Activated CD4-positive, alpha-beta T cell treated with anti-CD3 and anti-CD28 coated beads for 36 hours (primary cell): ENCODE measurements at regions of chr16 and their contacts with region 1.

Region 1: DNA sequence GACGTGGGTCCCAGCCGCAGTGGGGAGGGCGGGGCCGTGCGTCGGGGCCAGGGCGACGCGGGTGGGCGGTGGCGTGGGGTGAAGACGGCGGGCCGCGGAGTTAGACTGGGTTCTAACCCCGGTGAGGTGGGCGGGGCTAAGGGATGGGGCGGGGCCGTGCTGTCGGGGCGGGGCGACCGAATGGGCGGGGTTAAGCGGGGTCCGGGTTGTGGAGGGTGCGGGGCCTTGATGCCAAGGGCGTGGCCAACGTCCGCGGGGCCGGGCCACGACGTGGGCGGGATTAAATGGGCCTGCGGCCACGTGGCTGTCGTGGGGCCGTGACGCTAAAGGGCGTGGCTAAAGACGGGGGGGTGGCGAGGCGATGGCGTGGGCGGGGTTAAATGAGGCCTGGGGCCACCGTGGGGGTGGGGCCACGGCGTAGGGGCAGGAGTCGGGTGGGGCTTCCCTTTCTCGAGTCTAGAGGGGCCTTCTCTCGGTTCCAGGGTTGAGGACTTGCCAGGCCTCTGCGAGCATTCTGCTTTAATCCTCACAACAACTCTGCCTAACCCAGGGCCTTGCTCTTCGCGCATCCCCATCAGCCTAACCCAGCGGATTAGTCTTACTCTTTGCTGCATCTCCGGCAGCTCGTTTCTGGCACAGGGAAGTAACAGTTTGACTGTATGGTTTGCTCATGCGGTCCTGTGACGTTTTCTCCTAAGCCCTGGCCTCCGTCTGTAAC is 739 bp downstream of the TCF25 start:
- DNase-seq: peak; percentile 99
- ATAC-seq: peak; percentile 78
- H3K4me3 Mint-ChIP-seq: peak overlapping the region; percentile 87
- H3K27ac Mint-ChIP-seq: peak overlapping the region; percentile 95
- H3K4me1 Mint-ChIP-seq: peaks cover 14% of the 10 kb centered on the region
- H3K27me3 Mint-ChIP-seq: no peaks in the 10 kb centered on the region

Region 2: GRCh38 chr16:89193021-89193575 is 681.0 kb before region 1 on chr16:
- CTCF ChIA-PET with region 1: no interaction called
- POLR2A ChIA-PET with region 1: no interaction called
- intact Hi-C with region 1: loop called in 1 of 2 experiments (anchors 2 kb)
- DNase-seq: no peak
- ATAC-seq: peak; percentile 78
- H3K4me3 Mint-ChIP-seq: no peak overlapping the region
- H3K27ac Mint-ChIP-seq: no peak overlapping the region
- H3K4me1 Mint-ChIP-seq: no peaks in the 10 kb centered on the region
- H3K27me3 Mint-ChIP-seq: no peaks in the 10 kb centered on the region

Region 3: GRCh38 chr16:89560378-89561141 is 313.6 kb before region 1 on chr16 and contains the start of gene RPL13:
- CTCF ChIA-PET with region 1: no interaction called
- POLR2A ChIA-PET with region 1: no interaction called
- intact Hi-C with region 1: loop called in 1 of 2 experiments (anchors 1 kb)
- DNase-seq: peak; percentile 97
- ATAC-seq: peak; percentile 90
- H3K4me3 Mint-ChIP-seq: peak within 1 kb of the TSS; percentile 95
- H3K27ac Mint-ChIP-seq: peak within 1 kb of the TSS; percentile 99
- H3K4me1 Mint-ChIP-seq: peaks cover 46% of the 10 kb centered on the region
- H3K27me3 Mint-ChIP-seq: no peaks in the 10 kb centered on the region
- total RNA-seq, gene RPL13: 2,518 to 3,038 TPM

Region 4: DNA sequence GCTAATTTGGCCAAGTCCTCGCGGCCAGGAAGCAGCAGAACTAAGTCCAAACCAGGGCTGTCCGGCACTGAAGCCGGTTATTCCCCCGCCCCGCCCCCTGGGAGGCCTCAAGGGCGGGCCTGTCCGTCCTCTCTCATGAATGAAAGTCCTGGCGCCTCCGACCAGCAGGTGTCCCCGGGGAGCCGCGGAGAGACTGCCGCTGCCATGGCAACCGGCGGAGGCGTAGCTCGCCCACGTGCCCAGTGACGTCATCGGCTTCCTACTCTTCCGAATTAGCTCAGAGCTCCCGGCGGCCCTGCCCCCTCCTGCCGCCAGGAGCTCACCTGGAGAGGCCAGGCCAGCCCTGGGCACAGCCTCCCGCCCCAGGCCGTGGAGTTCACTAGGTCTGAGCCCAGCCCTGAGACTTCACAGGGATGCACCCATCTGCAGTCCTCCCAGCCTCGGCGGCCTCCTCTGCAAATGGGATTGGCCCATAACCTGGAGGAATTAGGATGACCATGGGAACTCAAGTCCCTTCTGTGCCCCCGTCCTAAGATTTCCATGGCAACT is 174.0 kb before region 1 on chr16:
- CTCF ChIA-PET with region 1: interaction called, 3 read pairs
- POLR2A ChIA-PET with region 1: interaction called, 4 read pairs
- intact Hi-C with region 1: loop called in 1 of 2 experiments (anchors 1 kb)
- DNase-seq: peak; percentile 99
- ATAC-seq: peak; percentile 21
- H3K4me3 Mint-ChIP-seq: peak overlapping the region; percentile 71
- H3K27ac Mint-ChIP-seq: peak overlapping the region; percentile 25
- H3K4me1 Mint-ChIP-seq: peaks cover 13% of the 10 kb centered on the region
- H3K27me3 Mint-ChIP-seq: no peaks in the 10 kb centered on the region

Region 5: DNA sequence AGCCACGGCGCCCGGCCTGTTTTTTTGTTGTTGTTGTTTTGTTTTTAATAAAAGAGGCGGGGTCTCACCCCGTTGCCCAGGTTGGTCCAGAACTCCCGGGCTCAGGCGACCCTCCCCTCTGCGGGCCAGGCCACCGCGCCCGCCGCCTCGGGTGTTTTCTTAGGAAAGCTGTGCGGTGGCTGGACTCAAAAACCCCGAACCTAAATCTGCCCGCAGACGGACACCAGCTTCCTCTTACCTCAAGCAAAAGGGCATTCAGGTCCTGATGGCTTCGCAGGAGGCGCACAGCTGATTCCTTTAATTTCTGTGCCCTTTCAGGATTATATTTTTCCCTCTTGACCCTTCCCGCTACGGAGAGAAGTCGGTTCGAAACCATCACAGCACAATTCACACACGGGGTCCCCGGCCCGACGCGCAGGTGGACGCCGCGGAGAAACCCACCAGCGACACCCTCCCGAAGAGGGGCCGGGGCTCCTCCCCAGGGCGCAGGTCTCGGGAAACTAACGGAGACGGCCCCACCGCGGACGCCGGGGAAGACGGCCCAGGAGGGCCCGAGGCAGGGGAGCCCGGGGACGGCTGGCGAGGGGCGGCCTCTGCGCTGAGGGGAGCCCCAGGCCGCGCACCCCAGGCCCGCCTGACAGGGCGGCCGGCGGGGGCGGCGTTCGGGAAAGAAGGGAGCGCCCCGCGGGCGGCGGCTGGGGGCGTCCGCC is 58.3 kb before region 1 on chr16:
- CTCF ChIA-PET with region 1: interaction called, 6 read pairs
- POLR2A ChIA-PET with region 1: interaction called, 6 read pairs
- intact Hi-C with region 1: loop called in 1 of 2 experiments (anchors 1 kb)
- DNase-seq: peak; percentile 43
- ATAC-seq: peak; percentile 21
- H3K4me3 Mint-ChIP-seq: peak overlapping the region; percentile 89
- H3K27ac Mint-ChIP-seq: peak overlapping the region; percentile 67
- H3K4me1 Mint-ChIP-seq: peaks cover 44% of the 10 kb centered on the region
- H3K27me3 Mint-ChIP-seq: no peaks in the 10 kb centered on the region

Region 6: DNA sequence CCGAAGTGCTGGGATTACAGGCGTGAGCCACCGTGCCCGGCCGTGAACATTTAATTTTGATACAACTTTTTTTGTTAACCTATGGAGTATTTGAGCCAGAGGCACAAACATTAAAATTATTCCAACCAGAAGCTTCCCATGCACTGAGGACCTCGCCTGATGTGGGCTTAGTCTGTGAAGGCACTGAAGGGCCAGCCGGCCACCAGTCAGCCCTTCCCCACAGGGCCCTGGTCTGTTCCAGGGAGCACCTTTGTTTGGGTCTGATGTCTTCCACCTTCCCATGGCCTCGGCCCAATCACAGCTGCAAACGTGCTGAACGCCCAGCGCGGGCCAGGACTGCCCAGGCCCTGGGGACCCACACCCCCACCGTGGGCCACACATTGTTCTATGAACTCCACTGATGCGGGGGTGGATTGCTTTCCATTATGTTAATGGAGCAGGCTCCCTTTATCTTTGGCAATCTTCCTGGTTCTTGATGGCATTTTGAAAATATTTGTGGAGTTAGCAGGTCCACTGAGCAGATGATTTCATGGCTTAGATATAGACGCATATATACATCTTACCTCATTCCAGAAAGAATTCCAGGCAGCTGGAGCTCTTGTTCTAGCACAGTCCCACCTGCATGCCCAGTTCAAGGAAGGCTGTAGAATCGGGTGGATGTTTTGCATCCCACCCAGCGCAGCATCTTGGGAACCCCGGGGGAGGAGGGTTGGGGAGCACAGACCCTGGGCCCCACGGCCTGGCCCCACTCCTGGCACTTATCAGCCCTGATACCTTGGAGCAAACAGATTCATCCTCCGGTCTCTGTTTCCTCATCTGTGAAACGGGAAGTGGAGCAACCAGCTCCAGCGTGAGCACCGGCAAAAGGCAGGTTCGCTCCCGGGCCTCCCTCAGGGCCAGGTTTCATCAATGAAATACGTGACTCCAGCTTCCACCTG is 31.4 kb before region 1 on chr16:
- CTCF ChIA-PET with region 1: no interaction called
- POLR2A ChIA-PET with region 1: no interaction called
- intact Hi-C with region 1: no loop called
- DNase-seq: no peak
- ATAC-seq: no peak
- H3K4me3 Mint-ChIP-seq: no peak overlapping the region
- H3K27ac Mint-ChIP-seq: no peak overlapping the region
- H3K4me1 Mint-ChIP-seq: peaks cover 17% of the 10 kb centered on the region
- H3K27me3 Mint-ChIP-seq: no peaks in the 10 kb centered on the region

Region 7: GRCh38 chr16:89903006-89903405 is 28.9 kb after region 1 on chr16:
- CTCF ChIA-PET with region 1: no interaction called
- POLR2A ChIA-PET with region 1: no interaction called
- intact Hi-C with region 1: no loop called
- DNase-seq: no peak
- ATAC-seq: no peak
- H3K4me3 Mint-ChIP-seq: no peak overlapping the region
- H3K27ac Mint-ChIP-seq: no peak overlapping the region
- H3K4me1 Mint-ChIP-seq: no peaks in the 10 kb centered on the region
- H3K27me3 Mint-ChIP-seq: no peaks in the 10 kb centered on the region

Region 8: DNA sequence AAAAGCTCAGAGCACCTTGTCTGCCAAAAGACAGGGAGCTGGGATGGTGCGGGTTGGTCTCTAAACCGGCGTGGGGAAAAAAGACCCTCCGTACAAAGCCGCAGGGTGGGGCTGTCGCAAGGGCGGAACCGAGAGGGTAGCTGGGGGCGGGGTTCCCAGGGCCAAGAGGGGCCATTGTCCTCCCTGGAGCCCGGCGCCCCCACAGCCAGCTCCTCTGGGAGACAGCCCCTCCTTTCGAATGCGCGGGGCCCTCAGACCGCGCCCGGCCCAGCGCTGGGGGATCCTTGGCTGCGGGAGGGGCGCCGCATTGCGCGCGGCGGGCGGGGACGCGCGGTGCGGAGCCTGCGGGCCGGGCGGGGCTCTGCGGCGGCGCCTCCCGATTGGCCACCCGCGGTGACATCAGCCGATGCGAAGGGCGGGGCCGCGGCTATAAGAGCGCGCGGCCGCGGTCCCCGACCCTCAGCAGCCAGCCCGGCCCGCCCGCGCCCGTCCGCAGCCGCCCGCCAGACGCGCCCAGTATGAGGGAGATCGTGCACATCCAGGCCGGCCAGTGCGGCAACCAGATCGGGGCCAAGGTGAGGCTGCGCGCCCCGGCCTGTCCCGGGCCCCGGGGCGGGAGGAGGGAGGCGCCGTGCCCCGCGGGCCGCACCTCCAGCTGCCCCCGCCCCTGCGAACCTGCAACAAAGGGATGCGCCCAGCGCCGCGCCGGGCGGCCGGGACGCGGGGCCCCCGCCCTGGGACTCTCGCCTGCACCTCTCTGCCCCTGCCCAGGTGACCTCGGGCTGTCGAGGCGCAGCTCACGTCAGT is 49.0 kb after region 1 on chr16 and contains the start of gene TUBB3:
- CTCF ChIA-PET with region 1: interaction called, 3 read pairs
- POLR2A ChIA-PET with region 1: no interaction called
- intact Hi-C with region 1: loop called in 1 of 2 experiments (anchors 2 kb)
- DNase-seq: peak; percentile 72
- ATAC-seq: peak; percentile 34
- H3K4me3 Mint-ChIP-seq: peak within 1 kb of the TSS; percentile 55
- H3K27ac Mint-ChIP-seq: no peak within 1 kb of the TSS
- H3K4me1 Mint-ChIP-seq: peaks cover 43% of the 10 kb centered on the region
- H3K27me3 Mint-ChIP-seq: peaks cover 38% of the 10 kb centered on the region
- total RNA-seq, gene TUBB3: 0.40 to 0.43 TPM

Region 9: GRCh38 chr16:90077226-90077756 is 203.2 kb after region 1 on chr16 and contains the start of gene PRDM7:
- CTCF ChIA-PET with region 1: no interaction called
- POLR2A ChIA-PET with region 1: no interaction called
- intact Hi-C with region 1: loop called in 1 of 2 experiments (anchors 1 kb)
- DNase-seq: peak; percentile 99
- ATAC-seq: peak; percentile 97
- H3K4me3 Mint-ChIP-seq: peak within 1 kb of the TSS; percentile 78
- H3K27ac Mint-ChIP-seq: peak within 1 kb of the TSS; percentile 82
- H3K4me1 Mint-ChIP-seq: peaks cover 28% of the 10 kb centered on the region
- H3K27me3 Mint-ChIP-seq: peaks cover 11% of the 10 kb centered on the region
- total RNA-seq, gene PRDM7: not detected